ENCODE measurements at regions of chr5 and their contacts with region 1.

Region 1: GRCh38 chr5:150436141-150436680 is 13.3 kb downstream of the RPS14 start:
- DNase-seq: peak; percentile 60
- ATAC-seq: peak; percentile 96
- H3K4me3 ChIP-seq: no peak overlapping the region
- H3K27ac ChIP-seq: no peak overlapping the region
- H3K4me1 ChIP-seq: peaks cover 5% of the 10 kb centered on the region
- H3K27me3 ChIP-seq: no peaks in the 10 kb centered on the region
- CTCF ChIP-seq: peak; percentile 80 to 94 (median 83)
- EP300 ChIP-seq: no peak
- POLR2A ChIP-seq: no peak
- RAD21 ChIP-seq: peak; percentile 87

Region 2: GRCh38 chr5:150161242-150162141 is 274.7 kb before region 1 on chr5:
- CTCF ChIA-PET with region 1: interaction called, 3 read pairs
- POLR2A ChIA-PET with region 1: no interaction called
- RAD21 ChIA-PET with region 1: interaction called, 8 read pairs
- SMC1A ChIA-PET with region 1: interaction called, 5 read pairs
- in situ Hi-C with region 1: no loop called
- intact Hi-C with region 1: loop called (anchors 2 kb)
- DNase-seq: no peak
- ATAC-seq: peak; percentile 92
- H3K4me3 ChIP-seq: no peak overlapping the region
- H3K27ac ChIP-seq: no peak overlapping the region
- H3K4me1 ChIP-seq: peaks cover 9% of the 10 kb centered on the region
- H3K27me3 ChIP-seq: no peaks in the 10 kb centered on the region; a peak in 1 of 4 replicates
- CTCF ChIP-seq: peak; percentile 93 to 99 (median 93)
- EP300 ChIP-seq: no peak
- POLR2A ChIP-seq: no peak
- RAD21 ChIP-seq: peak; percentile 78

Region 3: DNA sequence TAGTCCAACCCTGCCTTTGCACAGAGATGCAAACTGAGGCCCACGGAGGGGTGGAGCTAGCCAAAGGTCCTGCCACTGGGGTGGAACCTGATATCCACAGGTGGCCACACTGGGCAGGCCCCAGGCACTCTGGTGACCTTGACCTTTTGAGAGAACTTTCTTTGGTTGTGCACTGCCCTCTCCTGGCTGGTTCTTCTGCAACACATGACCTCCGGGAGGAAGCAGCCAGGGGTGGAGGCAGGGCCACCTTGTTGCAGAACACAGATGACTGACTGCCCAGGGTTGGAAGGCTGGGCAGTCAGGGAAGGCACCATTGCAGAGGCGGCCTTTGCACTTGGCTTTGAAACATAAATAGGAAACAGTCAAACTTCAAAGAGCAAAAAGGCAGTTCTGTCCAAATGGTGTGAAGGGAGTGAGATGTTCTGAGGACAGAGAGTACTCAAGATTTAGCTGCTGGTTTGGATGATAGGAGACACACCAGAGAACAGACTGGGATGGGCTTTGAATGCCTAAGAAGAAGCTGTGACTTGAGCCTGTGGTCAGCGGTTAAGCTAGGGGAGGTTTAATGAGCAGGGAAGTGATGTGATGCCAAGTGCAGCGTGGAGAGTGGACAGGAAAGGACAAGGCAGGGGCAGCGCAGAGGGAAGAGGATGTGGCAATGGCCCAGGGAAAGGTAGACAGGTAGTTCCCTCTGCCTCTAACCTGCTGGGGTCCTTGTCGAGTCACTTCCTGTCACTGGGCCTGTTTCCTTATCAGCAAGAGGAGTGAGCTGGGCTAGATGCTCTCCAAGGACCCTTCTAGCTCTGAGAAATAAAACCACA is 85.5 kb before region 1 on chr5:
- CTCF ChIA-PET with region 1: interaction called, 19 read pairs
- POLR2A ChIA-PET with region 1: no interaction called
- RAD21 ChIA-PET with region 1: interaction called, 6 read pairs
- SMC1A ChIA-PET with region 1: no interaction called
- in situ Hi-C with region 1: no loop called
- intact Hi-C with region 1: loop called (anchors 10 kb)
- DNase-seq: peak; percentile 13
- ATAC-seq: peak; percentile 99
- H3K4me3 ChIP-seq: no peak overlapping the region
- H3K27ac ChIP-seq: no peak overlapping the region
- H3K4me1 ChIP-seq: peaks cover 8% of the 10 kb centered on the region; the same call in 1 of the 2 replicates
- H3K27me3 ChIP-seq: no peaks in the 10 kb centered on the region
- CTCF ChIP-seq: peak; percentile 69 to 79 (median 73)
- EP300 ChIP-seq: no peak
- POLR2A ChIP-seq: no peak
- RAD21 ChIP-seq: peak; percentile 74

Region 4: DNA sequence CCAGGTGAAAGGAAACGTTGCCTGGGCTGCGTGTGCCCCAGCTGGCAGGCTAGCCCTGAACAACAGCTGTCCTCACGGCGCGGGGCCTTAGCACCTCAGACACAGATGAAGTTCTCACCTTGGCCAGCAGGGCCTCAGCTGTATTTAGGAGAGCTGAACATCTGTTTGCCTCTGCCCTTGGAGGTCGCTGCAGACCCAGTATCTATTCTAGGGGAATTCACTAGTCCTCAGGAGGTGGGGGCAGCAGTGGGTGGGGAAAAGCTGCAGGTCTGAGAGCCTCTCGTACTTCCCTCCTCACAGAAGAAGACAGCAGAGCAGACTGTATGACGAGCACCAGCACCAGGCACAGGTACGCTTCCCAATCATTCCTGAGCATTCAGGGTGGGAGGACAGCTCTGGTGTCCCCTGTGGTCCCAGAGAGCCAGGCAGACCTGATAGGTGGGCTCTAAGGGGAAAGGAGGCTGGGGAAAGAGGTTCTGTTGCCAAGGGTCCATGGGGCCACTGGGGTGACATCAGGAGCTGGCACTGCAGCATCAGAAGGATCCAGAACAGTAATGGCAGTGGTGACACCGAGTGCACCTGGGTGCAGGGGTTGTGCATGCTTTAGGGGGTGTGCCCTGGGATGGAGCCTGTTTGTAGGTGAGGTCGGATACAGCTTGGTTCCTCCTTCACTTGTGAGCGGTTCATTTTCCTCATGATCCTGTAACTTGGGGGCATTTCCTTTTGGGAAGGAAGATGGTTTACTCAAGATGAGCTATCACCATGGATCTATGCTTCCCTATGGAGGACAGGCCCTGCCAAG is 37.3 kb before region 1 on chr5:
- CTCF ChIA-PET with region 1: interaction called, 274 read pairs
- POLR2A ChIA-PET with region 1: interaction called, 39 read pairs
- RAD21 ChIA-PET with region 1: interaction called, 115 read pairs
- SMC1A ChIA-PET with region 1: interaction called, 127 read pairs
- in situ Hi-C with region 1: no loop called
- intact Hi-C with region 1: loop called (anchors 1 kb)
- DNase-seq: no peak
- ATAC-seq: peak; percentile 66
- H3K4me3 ChIP-seq: no peak overlapping the region
- H3K27ac ChIP-seq: no peak overlapping the region
- H3K4me1 ChIP-seq: peaks cover 5% of the 10 kb centered on the region
- H3K27me3 ChIP-seq: no peaks in the 10 kb centered on the region
- CTCF ChIP-seq: peak; percentile 74 to 81 (median 77)
- EP300 ChIP-seq: no peak
- POLR2A ChIP-seq: peak; percentile 77
- RAD21 ChIP-seq: peak; percentile 71